ENCODE measurements at regions of chr19 and their contacts with region 1.

Region 1: DNA sequence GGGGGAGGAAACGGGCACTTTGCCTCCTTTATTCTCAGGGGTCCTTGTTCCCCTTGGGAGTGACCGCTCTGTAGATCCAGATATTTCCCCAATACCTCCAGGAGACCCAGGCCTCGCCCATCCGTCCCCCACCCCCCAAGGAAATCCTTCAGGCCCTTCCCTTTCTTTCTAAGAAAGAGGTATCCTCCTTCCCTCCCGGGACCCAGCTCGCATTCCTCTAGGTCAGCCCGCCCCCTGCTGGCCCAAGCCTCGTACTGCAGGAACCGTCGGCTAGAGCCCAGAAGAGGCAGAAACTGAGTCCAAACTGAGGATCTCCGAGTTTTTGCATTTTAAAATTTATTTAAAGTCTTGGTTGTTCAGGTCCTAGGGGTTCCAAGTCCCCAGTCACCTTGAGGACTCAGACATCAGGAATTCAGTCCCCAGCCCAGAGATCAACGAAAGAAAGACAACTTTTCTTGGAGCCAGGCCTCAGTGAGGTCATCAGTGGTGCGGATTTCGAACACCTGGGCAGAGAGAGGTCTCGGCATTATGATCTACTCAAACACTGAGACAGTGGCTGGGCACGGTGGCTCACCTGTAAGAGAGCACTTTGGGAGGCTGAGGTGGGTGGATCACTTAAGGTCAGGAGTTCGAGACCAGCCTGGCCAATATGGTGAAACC is 7.5 kb upstream of the LRFN1 start:
- DNase-seq: peak; percentile 77
- ATAC-seq: peak; percentile 96
- H3K4me3 Mint-ChIP-seq: no peak overlapping the region
- H3K27ac Mint-ChIP-seq: no peak overlapping the region
- H3K4me1 Mint-ChIP-seq: peaks cover 22% of the 10 kb centered on the region
- H3K27me3 Mint-ChIP-seq: no peaks in the 10 kb centered on the region
- CTCF ChIP-seq: no peak

Region 2: GRCh38 chr19:39110263-39110967 is 217.8 kb before region 1 on chr19:
- CTCF ChIA-PET with region 1: interaction called, 5 read pairs
- POLR2A ChIA-PET with region 1: no interaction called
- intact Hi-C with region 1: loop called (anchors 1 kb)
- DNase-seq: peak; percentile 66
- ATAC-seq: peak; percentile 87
- H3K4me3 Mint-ChIP-seq: no peak overlapping the region
- H3K27ac Mint-ChIP-seq: no peak overlapping the region
- H3K4me1 Mint-ChIP-seq: peaks cover 3% of the 10 kb centered on the region
- H3K27me3 Mint-ChIP-seq: peaks cover 7% of the 10 kb centered on the region
- CTCF ChIP-seq: no peak

Region 3: DNA sequence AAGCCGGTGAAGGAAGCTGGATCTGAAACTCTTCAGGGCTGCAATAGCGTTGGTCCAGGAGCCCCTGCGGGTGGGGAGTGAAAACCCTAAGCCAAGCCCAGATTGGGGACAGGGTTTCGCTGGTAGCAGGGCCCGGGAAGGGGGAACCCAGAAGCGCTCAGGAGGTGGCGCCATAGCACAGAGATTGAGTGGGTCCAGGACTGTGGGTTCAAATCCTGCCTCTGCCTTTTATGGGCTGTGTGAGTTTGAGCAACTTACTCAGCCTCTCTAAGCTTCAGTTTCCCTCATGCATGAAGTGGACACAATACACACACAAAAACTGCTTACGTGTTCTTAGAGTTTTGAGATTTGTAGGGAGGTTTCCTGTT is 115.8 kb before region 1 on chr19:
- CTCF ChIA-PET with region 1: interaction called, 3 read pairs
- POLR2A ChIA-PET with region 1: no interaction called
- intact Hi-C with region 1: loop called (anchors 1 kb)
- DNase-seq: no peak
- ATAC-seq: peak; percentile 40
- H3K4me3 Mint-ChIP-seq: no peak overlapping the region
- H3K27ac Mint-ChIP-seq: no peak overlapping the region
- H3K4me1 Mint-ChIP-seq: no peaks in the 10 kb centered on the region
- H3K27me3 Mint-ChIP-seq: peaks cover 10% of the 10 kb centered on the region
- CTCF ChIP-seq: no peak